ENCODE measurements at regions of chr3 and their contacts with region 1.

Region 1: DNA sequence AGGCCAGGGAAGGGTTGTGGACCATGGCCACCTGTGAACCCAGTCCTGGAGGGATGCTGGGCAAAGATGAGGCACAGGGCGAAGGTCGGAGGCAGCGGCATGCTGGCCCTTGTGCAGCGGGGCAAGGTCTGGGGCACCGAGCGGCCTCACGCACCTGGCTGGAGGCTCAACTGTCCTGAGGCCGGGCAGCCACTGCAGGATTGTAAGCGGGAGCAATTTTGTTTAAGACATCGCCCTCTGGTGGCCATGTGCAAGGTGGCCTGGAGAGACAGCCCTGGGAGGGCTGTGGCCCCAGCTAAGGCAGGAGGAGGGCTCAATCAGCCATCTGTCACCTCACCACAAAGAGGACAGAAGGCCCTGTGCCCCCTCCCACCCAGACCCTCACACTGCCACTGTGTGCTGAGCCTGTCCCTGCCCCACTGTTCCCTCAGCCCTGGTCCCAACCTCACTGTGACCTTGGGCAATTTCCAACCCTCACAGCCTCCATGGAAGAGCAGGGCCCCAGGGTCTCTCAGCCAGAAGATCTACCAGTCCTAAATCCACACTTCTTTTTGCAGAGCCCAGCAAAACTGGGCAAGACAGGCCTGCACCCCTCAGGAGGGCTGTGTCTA is 46.2 kb downstream of the TPRA1 start:
- DNase-seq: peak; percentile 47
- H3K4me3 ChIP-seq: no peak overlapping the region
- H3K27ac ChIP-seq: no peak overlapping the region
- H3K4me1 ChIP-seq: peaks cover 4% of the 10 kb centered on the region
- H3K27me3 ChIP-seq: no peaks in the 10 kb centered on the region
- CTCF ChIP-seq: peak; percentile 80 to 89
- POLR2A ChIP-seq: no peak

Region 2: GRCh38 chr3:126522363-126522788 is 1021.9 kb before region 1 on chr3:
- CTCF ChIA-PET with region 1: interaction called, 32 read pairs
- POLR2A ChIA-PET with region 1: no interaction called
- dilution Hi-C with region 1: no loop called
- intact Hi-C with region 1: loop called (anchors 1 kb)
- DNase-seq: peak; percentile 43
- H3K4me3 ChIP-seq: no peak overlapping the region
- H3K27ac ChIP-seq: no peak overlapping the region
- H3K4me1 ChIP-seq: no peaks in the 10 kb centered on the region
- H3K27me3 ChIP-seq: peaks cover 13 to 17% of the 10 kb centered on the region in 2 experiments
- CTCF ChIP-seq: peak; percentile 67 to 78
- POLR2A ChIP-seq: no peak

Region 3: GRCh38 chr3:126679318-126679751 is 865.0 kb before region 1 on chr3:
- CTCF ChIA-PET with region 1: interaction called, 75 read pairs
- POLR2A ChIA-PET with region 1: no interaction called
- dilution Hi-C with region 1: no loop called
- intact Hi-C with region 1: loop called (anchors 1 kb)
- DNase-seq: peak; percentile 76
- H3K4me3 ChIP-seq: no peak overlapping the region
- H3K27ac ChIP-seq: no peak overlapping the region
- H3K4me1 ChIP-seq: no peaks in the 10 kb centered on the region
- H3K27me3 ChIP-seq: peaks cover 6 to 26% of the 10 kb centered on the region in 2 experiments
- CTCF ChIP-seq: peak; percentile 91 to 97
- POLR2A ChIP-seq: no peak

Region 4: DNA sequence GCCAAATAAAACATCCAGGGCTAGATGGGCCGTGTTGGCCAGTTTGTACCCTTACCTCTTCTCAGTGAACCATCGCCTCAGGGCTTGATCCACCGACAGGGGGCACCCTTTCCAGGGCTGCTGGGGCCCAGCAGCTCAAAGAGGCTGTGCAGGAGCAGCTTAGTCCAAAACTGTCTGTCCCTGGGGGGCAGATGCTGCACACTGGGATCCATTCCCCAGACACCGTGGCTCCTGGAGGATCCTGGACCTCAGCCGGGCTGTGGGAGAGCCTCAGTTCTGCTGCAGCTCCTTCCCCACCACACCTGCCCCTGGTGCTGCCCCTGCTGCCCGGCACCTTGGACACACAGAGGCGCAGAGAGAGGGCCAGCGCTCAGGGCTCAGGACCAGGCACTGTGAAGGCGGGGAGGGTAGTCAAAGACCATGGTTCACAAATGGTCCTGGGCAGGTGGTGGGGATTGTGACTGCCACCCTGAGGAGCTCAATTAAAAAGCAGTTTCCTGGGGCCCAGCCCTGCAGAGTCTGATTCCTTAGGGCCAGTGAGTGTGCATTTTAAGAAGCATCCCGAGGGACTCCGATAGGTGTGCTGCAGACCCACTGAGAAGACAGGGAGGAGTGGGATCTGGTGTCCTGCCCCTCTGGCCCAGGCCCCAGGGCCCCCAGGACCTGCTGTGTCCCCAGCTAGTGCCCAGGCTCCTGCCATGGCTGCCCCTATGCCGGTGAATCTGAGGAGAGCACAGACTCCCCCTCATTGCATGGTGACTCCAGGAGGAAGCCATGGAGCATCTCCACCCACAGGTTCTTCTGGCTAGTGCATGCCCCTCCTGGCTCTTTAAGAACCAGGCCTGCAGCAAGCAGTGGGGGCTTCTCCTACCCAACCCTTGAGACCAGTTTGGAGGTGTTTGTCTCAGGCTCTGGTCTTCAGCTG is 169.9 kb before region 1 on chr3:
- CTCF ChIA-PET with region 1: interaction called, 8 read pairs
- POLR2A ChIA-PET with region 1: no interaction called
- dilution Hi-C with region 1: no loop called
- intact Hi-C with region 1: loop called (anchors 10 kb)
- DNase-seq: no peak
- H3K4me3 ChIP-seq: no peak overlapping the region
- H3K27ac ChIP-seq: no peak overlapping the region
- H3K4me1 ChIP-seq: no peaks in the 10 kb centered on the region
- H3K27me3 ChIP-seq: no peaks in the 10 kb centered on the region
- CTCF ChIP-seq: peak; percentile 29 to 48
- POLR2A ChIP-seq: no peak